Mammary epithelial cell (primary cell): ENCODE measurements at regions of chr2 and their contacts with region 1.

Region 1: DNA sequence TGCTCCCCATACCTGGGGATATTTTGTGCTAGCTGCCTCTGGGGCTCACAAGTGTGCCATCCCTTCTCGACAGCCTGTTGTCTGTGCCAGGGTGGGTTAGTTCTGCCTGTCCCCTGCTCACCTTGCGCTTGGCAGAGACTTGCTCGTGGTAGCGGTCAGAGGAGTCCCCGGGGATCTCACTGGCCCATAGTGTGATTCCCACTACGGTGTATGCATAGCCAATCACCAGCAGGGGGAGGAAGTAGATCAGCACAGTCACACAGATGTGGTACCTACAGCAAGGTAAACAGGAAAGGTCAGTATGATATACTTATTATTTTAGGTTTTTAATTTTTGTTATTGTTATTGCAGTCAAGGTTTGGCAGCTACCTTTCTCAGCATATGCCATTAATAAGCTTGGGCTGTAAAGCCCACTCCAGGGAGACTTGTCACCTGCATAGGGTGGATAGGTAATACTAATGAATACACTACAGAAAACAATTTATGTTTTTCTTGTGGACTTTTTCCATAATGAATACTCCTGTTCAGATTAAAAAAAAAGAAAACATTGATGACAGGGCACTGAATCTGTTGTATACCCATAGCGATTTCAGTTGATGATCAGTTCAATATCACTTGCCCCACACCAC is 95.2 kb downstream of the POLE4 start:
- DNase-seq: peak; percentile 24
- H3K4me3 ChIP-seq: no peak overlapping the region
- H3K27ac ChIP-seq: no peak overlapping the region
- H3K4me1 ChIP-seq: no peaks in the 10 kb centered on the region
- H3K27me3 ChIP-seq: no peaks in the 10 kb centered on the region
- CTCF ChIP-seq: peak; percentile 76 to 90

Region 2: DNA sequence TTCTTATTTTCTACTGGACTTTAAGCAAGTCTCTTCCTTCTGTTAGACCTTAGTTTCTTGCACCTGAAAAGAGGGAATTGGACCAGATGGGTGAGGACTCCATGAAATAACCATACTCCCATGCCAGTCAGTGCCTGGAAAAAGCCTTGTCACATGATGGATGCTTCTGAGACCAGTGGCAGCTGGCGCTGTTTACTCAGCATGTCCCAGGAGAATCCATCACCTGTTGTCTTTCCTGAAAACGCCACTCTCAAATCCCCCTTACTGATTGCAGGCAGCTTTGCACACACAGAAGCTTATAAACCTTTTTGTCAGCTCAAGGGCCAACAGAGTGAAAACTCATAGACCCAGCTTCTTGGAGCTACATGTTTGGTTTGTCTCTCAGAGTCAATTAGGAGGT is 22.5 kb after region 1 on chr2:
- CTCF ChIA-PET with region 1: no interaction called
- dilution Hi-C with region 1: no loop called
- in situ Hi-C with region 1: no loop called
- intact Hi-C with region 1: no loop called
- DNase-seq: no peak
- H3K4me3 ChIP-seq: no peak overlapping the region
- H3K27ac ChIP-seq: no peak overlapping the region
- H3K4me1 ChIP-seq: no peaks in the 10 kb centered on the region
- H3K27me3 ChIP-seq: no peaks in the 10 kb centered on the region
- CTCF ChIP-seq: no peak

Region 3: GRCh38 chr2:75241696-75242095 is 188.1 kb after region 1 on chr2:
- CTCF ChIA-PET with region 1: no interaction called
- dilution Hi-C with region 1: no loop called
- in situ Hi-C with region 1: no loop called
- intact Hi-C with region 1: loop called (anchors 5 kb)
- DNase-seq: peak; percentile 5
- H3K4me3 ChIP-seq: no peak overlapping the region
- H3K27ac ChIP-seq: no peak overlapping the region
- H3K4me1 ChIP-seq: no peaks in the 10 kb centered on the region
- H3K27me3 ChIP-seq: no peaks in the 10 kb centered on the region
- CTCF ChIP-seq: peak; percentile 26 to 35